ENCODE measurements at regions of chr1 and their contacts with region 1.

Region 1: GRCh38 chr1:172002725-172003345 is 161.5 kb downstream of the DNM3 start:
- DNase-seq: peak; percentile 28
- ATAC-seq: peak; percentile 72
- H3K4me3 ChIP-seq: no peak overlapping the region
- H3K27ac ChIP-seq: no peak overlapping the region
- H3K4me1 ChIP-seq: no peaks in the 10 kb centered on the region
- H3K27me3 ChIP-seq: no peaks in the 10 kb centered on the region; a peak in 1 of 4 replicates
- CTCF ChIP-seq: peak; percentile 56 to 85 (median 65)
- EP300 ChIP-seq: no peak
- POLR2A ChIP-seq: no peak
- RAD21 ChIP-seq: peak; percentile 97

Region 2: DNA sequence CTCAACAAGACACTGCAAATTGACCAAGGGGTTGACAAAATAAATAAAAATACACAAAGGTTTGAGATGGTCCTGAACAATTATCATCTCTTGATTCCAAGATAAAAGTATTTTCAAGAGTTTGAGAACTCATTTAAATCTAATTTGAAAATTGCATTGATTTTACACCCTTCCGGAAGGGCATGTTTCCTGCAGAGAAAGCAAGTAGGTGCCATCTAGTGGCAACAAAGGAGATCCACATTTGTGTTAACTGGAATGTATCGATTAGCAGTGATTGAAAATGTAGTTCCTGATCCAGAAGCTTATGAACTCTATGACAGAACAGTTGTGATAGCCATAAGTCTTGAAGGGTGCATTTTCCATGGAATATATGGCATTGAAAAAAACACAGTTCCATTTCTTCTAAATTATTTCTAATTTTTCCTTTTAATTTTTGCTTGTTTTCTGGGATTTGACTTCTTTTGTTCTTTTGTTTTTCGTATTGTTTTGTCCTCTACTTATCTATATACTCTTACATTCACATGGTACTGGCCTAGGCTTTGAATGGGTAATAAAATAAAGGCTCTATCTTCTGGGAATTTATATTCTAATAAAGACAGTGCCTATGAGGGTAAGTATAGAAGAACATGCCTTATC is 17.9 kb before region 1 on chr1:
- CTCF ChIA-PET with region 1: interaction called, 31 read pairs
- POLR2A ChIA-PET with region 1: no interaction called
- RAD21 ChIA-PET with region 1: interaction called, 5 read pairs
- SMC1A ChIA-PET with region 1: interaction called, 8 read pairs
- in situ Hi-C with region 1: no loop called
- intact Hi-C with region 1: no loop called
- DNase-seq: no peak
- ATAC-seq: peak; percentile 88
- H3K4me3 ChIP-seq: no peak overlapping the region
- H3K27ac ChIP-seq: no peak overlapping the region
- H3K4me1 ChIP-seq: no peaks in the 10 kb centered on the region
- H3K27me3 ChIP-seq: no peaks in the 10 kb centered on the region; a peak in 1 of 4 replicates
- CTCF ChIP-seq: peak; percentile 71 to 77 (median 74)
- EP300 ChIP-seq: no peak
- POLR2A ChIP-seq: no peak
- RAD21 ChIP-seq: peak; percentile 76

Region 3: DNA sequence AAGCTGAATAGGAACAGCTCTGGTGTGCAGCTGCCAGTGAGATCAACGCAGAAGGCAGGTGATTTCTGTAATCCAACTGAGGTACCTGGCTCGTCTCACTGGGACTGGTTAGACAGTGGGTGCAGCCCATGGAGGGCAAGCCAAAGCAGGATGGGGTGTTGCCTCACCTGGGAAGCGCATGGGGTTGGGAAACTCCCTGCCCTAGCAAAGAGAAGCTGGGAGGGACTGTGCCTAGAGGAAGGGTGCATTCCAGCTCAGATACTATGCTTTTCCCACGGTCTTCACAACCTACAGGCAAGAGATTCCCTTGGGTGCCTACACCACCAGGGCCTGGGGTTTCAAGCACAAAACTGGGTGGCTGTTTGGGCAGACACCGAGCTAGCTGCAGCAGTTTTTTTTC is 21.7 kb after region 1 on chr1:
- CTCF ChIA-PET with region 1: interaction called, 30 read pairs
- POLR2A ChIA-PET with region 1: no interaction called
- RAD21 ChIA-PET with region 1: interaction called, 11 read pairs
- SMC1A ChIA-PET with region 1: interaction called, 7 read pairs
- in situ Hi-C with region 1: no loop called
- intact Hi-C with region 1: no loop called
- DNase-seq: no peak
- ATAC-seq: no peak
- H3K4me3 ChIP-seq: no peak overlapping the region
- H3K27ac ChIP-seq: no peak overlapping the region
- H3K4me1 ChIP-seq: 0 out of 2 replicates have a peak, but pooled peaks cover 3% of the 10 kb centered on the region
- H3K27me3 ChIP-seq: no peaks in the 10 kb centered on the region
- CTCF ChIP-seq: no peak
- EP300 ChIP-seq: no peak
- POLR2A ChIP-seq: no peak
- RAD21 ChIP-seq: no peak

Region 4: GRCh38 chr1:172089768-172090510 is 87.1 kb after region 1 on chr1:
- CTCF ChIA-PET with region 1: interaction called, 9 read pairs
- POLR2A ChIA-PET with region 1: no interaction called
- RAD21 ChIA-PET with region 1: interaction called, 10 read pairs
- SMC1A ChIA-PET with region 1: interaction called, 16 read pairs
- in situ Hi-C with region 1: no loop called
- intact Hi-C with region 1: loop called (anchors 2 kb)
- DNase-seq: peak; percentile 50
- ATAC-seq: peak; percentile 100
- H3K4me3 ChIP-seq: no peak overlapping the region
- H3K27ac ChIP-seq: no peak overlapping the region
- H3K4me1 ChIP-seq: no peaks in the 10 kb centered on the region
- H3K27me3 ChIP-seq: no peaks in the 10 kb centered on the region
- CTCF ChIP-seq: peak; percentile 78 to 89 (median 79)
- EP300 ChIP-seq: no peak
- POLR2A ChIP-seq: no peak
- RAD21 ChIP-seq: peak; percentile 85

Region 5: GRCh38 chr1:172398970-172399755 is 396.3 kb after region 1 on chr1:
- CTCF ChIA-PET with region 1: interaction called, 45 read pairs
- POLR2A ChIA-PET with region 1: interaction called, 3 read pairs
- RAD21 ChIA-PET with region 1: interaction called, 75 read pairs
- SMC1A ChIA-PET with region 1: interaction called, 49 read pairs
- in situ Hi-C with region 1: no loop called
- intact Hi-C with region 1: loop called (anchors 1 kb)
- DNase-seq: no peak
- ATAC-seq: peak; percentile 58
- H3K4me3 ChIP-seq: 0 out of 2 replicates have a peak overlapping the region, but pooled peaks have one; percentile 3
- H3K27ac ChIP-seq: peak overlapping the region; percentile 89
- H3K4me1 ChIP-seq: peaks cover 58% of the 10 kb centered on the region
- H3K27me3 ChIP-seq: no peaks in the 10 kb centered on the region
- CTCF ChIP-seq: peak; percentile 35 to 58 (median 54); a peak in 5 of 6 replicates
- EP300 ChIP-seq: no peak
- POLR2A ChIP-seq: no peak
- RAD21 ChIP-seq: peak; percentile 76

Region 6: GRCh38 chr1:172414331-172414730 is 411.5 kb after region 1 on chr1:
- CTCF ChIA-PET with region 1: interaction called, 15 read pairs
- POLR2A ChIA-PET with region 1: no interaction called
- RAD21 ChIA-PET with region 1: interaction called, 7 read pairs
- SMC1A ChIA-PET with region 1: interaction called, 15 read pairs
- in situ Hi-C with region 1: no loop called
- intact Hi-C with region 1: no loop called
- DNase-seq: no peak
- ATAC-seq: no peak
- H3K4me3 ChIP-seq: no peak overlapping the region
- H3K27ac ChIP-seq: no peak overlapping the region
- H3K4me1 ChIP-seq: no peaks in the 10 kb centered on the region
- H3K27me3 ChIP-seq: no peaks in the 10 kb centered on the region
- CTCF ChIP-seq: no peak
- EP300 ChIP-seq: no peak
- POLR2A ChIP-seq: no peak
- RAD21 ChIP-seq: no peak

Region 7: GRCh38 chr1:172443626-172444453 is 441.0 kb after region 1 on chr1 and contains the start of gene PIGC:
- CTCF ChIA-PET with region 1: interaction called, 91 read pairs
- POLR2A ChIA-PET with region 1: no interaction called
- RAD21 ChIA-PET with region 1: interaction called, 26 read pairs
- SMC1A ChIA-PET with region 1: interaction called, 18 read pairs
- in situ Hi-C with region 1: no loop called
- intact Hi-C with region 1: loop called (anchors 1 kb)
- DNase-seq: peak; percentile 59
- ATAC-seq: peak; percentile 99
- H3K4me3 ChIP-seq: peak within 1 kb of the TSS; percentile 94
- H3K27ac ChIP-seq: peak within 1 kb of the TSS; percentile 82
- H3K4me1 ChIP-seq: no peaks in the 10 kb centered on the region
- H3K27me3 ChIP-seq: no peaks in the 10 kb centered on the region
- CTCF ChIP-seq: peak; percentile 89 to 93 (median 91)
- EP300 ChIP-seq: no peak
- POLR2A ChIP-seq: peak; percentile 91
- RAD21 ChIP-seq: peak; percentile 73
- polyA plus RNA-seq, gene PIGC: 23.3 to 29.7 TPM

Measured in GM12878 (cell line).